ENCODE measurements at regions of chr5 and their contacts with region 1.

Region 1: GRCh38 chr5:147509710-147510651 is at the start of gene DPYSL3:
- DNase-seq: peak; percentile 78
- ATAC-seq: peak; percentile 89
- H3K4me3 ChIP-seq: peak within 1 kb of the TSS; percentile 56
- H3K27ac ChIP-seq: peak within 1 kb of the TSS; percentile 79
- H3K4me1 ChIP-seq: peaks cover 5% of the 10 kb centered on the region
- H3K27me3 ChIP-seq: no peaks in the 10 kb centered on the region
- CTCF ChIP-seq: peak; percentile 42
- POLR2A ChIP-seq: peak; percentile 70
- RAD21 ChIP-seq: peak; percentile 58
- total RNA-seq, gene DPYSL3: 46.1 and 50.2 TPM in 2 replicates

Region 2: DNA sequence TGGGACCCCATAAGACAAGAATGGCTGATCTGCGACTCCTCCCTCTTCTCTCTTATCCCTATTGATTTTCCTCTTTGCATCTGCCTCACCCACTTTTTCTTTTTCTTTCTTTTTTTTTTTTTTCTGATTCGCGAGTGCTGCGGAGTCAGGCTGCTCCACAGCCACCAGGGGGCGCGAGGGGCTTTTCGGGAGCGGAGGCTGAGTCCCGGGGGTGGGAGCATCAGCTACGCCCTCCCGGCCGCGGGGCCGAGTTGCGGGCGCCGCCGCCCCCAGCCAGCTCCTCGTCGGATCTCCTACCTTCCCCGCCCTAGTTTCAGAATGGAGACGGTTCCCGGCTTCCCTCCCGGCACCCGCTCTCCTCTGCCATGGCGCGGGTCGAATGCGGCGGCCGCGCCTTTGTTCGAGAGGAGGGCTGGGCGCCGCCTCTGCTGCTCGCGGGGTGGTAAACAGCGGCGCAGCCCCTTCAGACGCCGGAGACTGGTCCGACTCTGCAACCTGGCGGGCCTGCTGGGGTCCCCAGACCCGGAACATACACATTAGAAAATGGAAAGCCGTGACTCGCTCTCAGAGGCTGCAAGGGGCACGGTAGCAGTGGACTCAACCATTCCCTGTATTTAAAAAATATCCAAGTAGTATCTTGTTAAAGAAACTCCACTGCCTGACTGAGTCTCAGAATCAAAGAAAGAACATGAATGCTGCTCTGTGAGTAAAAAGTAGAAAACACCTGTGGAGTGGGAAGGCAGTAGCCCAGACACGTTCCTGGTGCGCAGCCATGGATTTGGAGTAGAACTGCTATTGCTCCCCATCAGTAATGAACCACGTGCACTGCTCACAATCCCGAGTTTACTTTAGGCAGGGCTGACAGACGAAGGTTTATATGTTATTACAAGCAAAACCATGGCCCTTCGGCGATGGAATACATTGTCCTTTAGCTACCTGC is 55.8 kb before region 1 on chr5:
- CTCF ChIA-PET with region 1: interaction called, 3 read pairs
- POLR2A ChIA-PET with region 1: no interaction called
- dilution Hi-C with region 1: no loop called
- in situ Hi-C with region 1: no loop called
- intact Hi-C with region 1: loop called (anchors 1 kb)
- DNase-seq: peak; percentile 85
- ATAC-seq: peak; percentile 89
- H3K4me3 ChIP-seq: peak overlapping the region; percentile 96
- H3K27ac ChIP-seq: peak overlapping the region; percentile 82
- H3K4me1 ChIP-seq: peaks cover 8% of the 10 kb centered on the region
- H3K27me3 ChIP-seq: no peaks in the 10 kb centered on the region; the same call in 1 of the 2 replicates
- CTCF ChIP-seq: peak; percentile 96
- POLR2A ChIP-seq: 0 out of 2 replicates have a peak, but pooled peaks have one; percentile 5
- RAD21 ChIP-seq: peak; percentile 84

Region 3: GRCh38 chr5:147490989-147491388 is 19.0 kb before region 1 on chr5:
- CTCF ChIA-PET with region 1: no interaction called
- POLR2A ChIA-PET with region 1: no interaction called
- dilution Hi-C with region 1: no loop called
- in situ Hi-C with region 1: no loop called
- intact Hi-C with region 1: loop called (anchors 2 kb)
- DNase-seq: no peak
- ATAC-seq: no peak
- H3K4me3 ChIP-seq: no peak overlapping the region
- H3K27ac ChIP-seq: no peak overlapping the region
- H3K4me1 ChIP-seq: no peaks in the 10 kb centered on the region
- H3K27me3 ChIP-seq: no peaks in the 10 kb centered on the region
- CTCF ChIP-seq: no peak
- POLR2A ChIP-seq: no peak
- RAD21 ChIP-seq: no peak

Measured in IMR-90 (cell line).